Posterior cingulate gyrus (tissue), 11 donors: ENCODE measurements at regions of chr5 and their contacts with region 1.

Region 1: GRCh38 chr5:145834917-145835847 is at the start of gene PRELID2:
- DNase-seq: peak; percentile 49 to 95 (median 69)

Region 2: DNA sequence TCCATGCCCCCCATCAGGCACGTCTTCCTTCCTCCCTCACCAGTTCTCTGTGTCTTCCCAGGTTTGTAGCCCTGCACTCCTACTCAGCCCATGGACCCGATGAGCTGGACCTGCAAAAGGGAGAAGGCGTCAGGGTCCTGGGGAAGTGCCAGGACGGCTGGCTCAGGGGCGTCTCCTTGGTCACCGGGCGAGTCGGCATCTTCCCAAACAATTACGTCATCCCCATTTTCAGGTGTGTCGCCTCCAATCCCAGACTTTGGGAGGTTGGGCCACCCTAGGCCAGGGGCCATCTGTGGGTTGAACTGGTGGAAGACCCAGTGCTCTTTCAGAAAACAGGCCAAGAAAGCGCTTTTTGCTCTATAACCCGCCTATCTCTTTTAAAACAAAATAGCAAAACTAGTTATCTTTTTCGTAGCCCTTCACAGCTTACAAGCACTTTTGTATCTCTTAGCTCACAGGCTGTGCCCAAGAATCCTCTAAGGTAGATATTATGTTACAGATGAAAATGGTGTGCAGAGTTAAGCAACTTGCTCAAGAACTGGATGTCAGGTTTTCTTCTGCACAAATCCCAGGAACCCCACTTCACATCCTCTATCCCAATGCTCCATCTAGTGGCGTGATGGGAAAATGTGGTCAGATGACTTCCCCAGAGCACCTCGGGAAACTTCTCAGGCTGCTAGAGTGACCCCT is 214.0 kb after region 1 on chr5:
- intact Hi-C with region 1: loop called (anchors 10 kb)
- DNase-seq: peak in 4 of 10 donors; percentile 44 to 58 (median 50)